Ascending aorta (tissue), 2 donors: ENCODE measurements at regions of chr4 and their contacts with region 1.

Region 1: GRCh38 chr4:37686373-37687193 is at the start of gene RELL1:
- DNase-seq: peak; percentile 98 to 100
- H3K4me3 ChIP-seq: peak within 1 kb of the TSS; percentile 97 to 100
- H3K27ac ChIP-seq: peak within 1 kb of the TSS; percentile 96 to 99
- H3K4me1 ChIP-seq: peaks cover 6 to 7% of the 10 kb centered on the region in 2 donors
- H3K27me3 ChIP-seq: no peaks in the 10 kb centered on the region
- CTCF ChIP-seq: no peak
- total RNA-seq, gene RELL1: 61.5 TPM

Region 2: GRCh38 chr4:37666625-37667071 is 19.9 kb before region 1 on chr4:
- intact Hi-C with region 1: loop called (anchors 2 kb)
- DNase-seq: peak in 1 of 2 donors; percentile 78
- H3K4me3 ChIP-seq: no peak overlapping the region
- H3K27ac ChIP-seq: peak overlapping the region; percentile 11 to 73
- H3K4me1 ChIP-seq: peaks cover 0 to 44% of the 10 kb centered on the region in 2 donors
- H3K27me3 ChIP-seq: no peaks in the 10 kb centered on the region
- CTCF ChIP-seq: no peak

Region 3: GRCh38 chr4:37826295-37827029 is 139.9 kb after region 1 on chr4 and contains the start of gene PGM2:
- intact Hi-C with region 1: loop called (anchors 5 kb)
- DNase-seq: peak; percentile 63 to 91
- H3K4me3 ChIP-seq: peak within 1 kb of the TSS; percentile 86 to 96
- H3K27ac ChIP-seq: peak within 1 kb of the TSS; percentile 86 to 90
- H3K4me1 ChIP-seq: peaks cover 2 to 16% of the 10 kb centered on the region in 2 donors
- H3K27me3 ChIP-seq: no peaks in the 10 kb centered on the region
- CTCF ChIP-seq: peak in 1 of 3 experiments; percentile 7
- total RNA-seq, gene PGM2: 7.1 TPM

Region 4: DNA sequence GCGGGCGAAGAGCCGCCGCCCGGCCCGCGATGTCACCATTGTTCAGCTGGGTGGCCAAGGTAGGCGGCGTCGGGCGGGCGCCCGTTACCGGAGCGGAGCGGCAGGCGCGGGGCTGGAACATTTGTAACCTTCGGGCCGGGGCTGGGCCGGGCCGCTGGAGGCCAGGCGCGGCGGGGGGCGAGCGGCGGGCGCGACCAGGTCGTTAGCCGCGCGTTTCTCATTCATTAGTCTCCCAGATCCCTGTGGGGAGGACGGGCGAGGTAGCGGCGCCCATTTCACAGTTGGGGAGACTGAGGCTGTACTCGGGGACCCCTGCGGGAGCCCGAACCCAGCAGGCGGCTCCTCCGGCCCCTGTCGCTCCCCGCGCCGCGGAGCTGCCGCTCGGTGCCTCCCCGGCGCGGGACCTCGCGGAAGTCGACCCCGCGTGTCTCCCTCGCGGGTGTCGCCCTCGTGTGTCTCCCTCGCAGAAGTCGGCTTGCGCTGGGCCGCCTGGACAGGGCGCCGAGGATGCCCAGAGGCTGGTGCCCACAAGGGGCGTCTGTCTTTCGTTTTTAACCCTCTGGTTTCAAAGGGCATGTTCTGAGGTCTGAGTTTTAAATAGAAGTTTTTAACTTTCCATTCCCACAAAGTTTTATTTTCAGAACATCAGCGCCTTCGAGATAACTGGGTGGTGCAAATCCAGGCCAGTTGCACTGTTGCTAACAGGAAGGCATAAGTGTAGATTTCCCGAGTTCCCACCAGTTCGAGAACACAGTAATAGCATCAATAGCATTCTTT is 291.1 kb after region 1 on chr4:
- intact Hi-C with region 1: loop called (anchors 2 kb)
- DNase-seq: peak; percentile 44 to 90
- H3K4me3 ChIP-seq: peak overlapping the region; percentile 76 to 99
- H3K27ac ChIP-seq: peak overlapping the region; percentile 97 to 99
- H3K4me1 ChIP-seq: peaks cover 4 to 26% of the 10 kb centered on the region in 2 donors
- H3K27me3 ChIP-seq: no peaks in the 10 kb centered on the region
- CTCF ChIP-seq: peak; percentile 76 to 86 (median 78)

Region 5: GRCh38 chr4:38034986-38035882 is 348.7 kb after region 1 on chr4:
- intact Hi-C with region 1: loop called (anchors 10 kb)
- DNase-seq: no peak
- H3K4me3 ChIP-seq: no peak overlapping the region
- H3K27ac ChIP-seq: peak overlapping the region; percentile 1 to 40
- H3K4me1 ChIP-seq: no peaks in the 10 kb centered on the region
- H3K27me3 ChIP-seq: no peaks in the 10 kb centered on the region
- CTCF ChIP-seq: peak; percentile 60 to 78 (median 72)

Region 6: GRCh38 chr4:39458505-39459300 is 1772.1 kb after region 1 on chr4 and contains the starts of genes LIAS and RPL9:
- intact Hi-C with region 1: loop called (anchors 5 kb)
- DNase-seq: peak; percentile 90 to 98
- H3K4me3 ChIP-seq: peak within 1 kb of the TSS; percentile 82 to 96
- H3K27ac ChIP-seq: peak within 1 kb of the TSS; percentile 96 to 98
- H3K4me1 ChIP-seq: peaks cover 2 to 16% of the 10 kb centered on the region in 2 donors
- H3K27me3 ChIP-seq: no peaks in the 10 kb centered on the region
- CTCF ChIP-seq: peak in 1 of 3 experiments; percentile 24
- total RNA-seq, gene LIAS: 2.9 TPM
- total RNA-seq, gene RPL9: 1,701 TPM